ENCODE measurements at regions of chr1 and their contacts with region 1.

Region 1: DNA sequence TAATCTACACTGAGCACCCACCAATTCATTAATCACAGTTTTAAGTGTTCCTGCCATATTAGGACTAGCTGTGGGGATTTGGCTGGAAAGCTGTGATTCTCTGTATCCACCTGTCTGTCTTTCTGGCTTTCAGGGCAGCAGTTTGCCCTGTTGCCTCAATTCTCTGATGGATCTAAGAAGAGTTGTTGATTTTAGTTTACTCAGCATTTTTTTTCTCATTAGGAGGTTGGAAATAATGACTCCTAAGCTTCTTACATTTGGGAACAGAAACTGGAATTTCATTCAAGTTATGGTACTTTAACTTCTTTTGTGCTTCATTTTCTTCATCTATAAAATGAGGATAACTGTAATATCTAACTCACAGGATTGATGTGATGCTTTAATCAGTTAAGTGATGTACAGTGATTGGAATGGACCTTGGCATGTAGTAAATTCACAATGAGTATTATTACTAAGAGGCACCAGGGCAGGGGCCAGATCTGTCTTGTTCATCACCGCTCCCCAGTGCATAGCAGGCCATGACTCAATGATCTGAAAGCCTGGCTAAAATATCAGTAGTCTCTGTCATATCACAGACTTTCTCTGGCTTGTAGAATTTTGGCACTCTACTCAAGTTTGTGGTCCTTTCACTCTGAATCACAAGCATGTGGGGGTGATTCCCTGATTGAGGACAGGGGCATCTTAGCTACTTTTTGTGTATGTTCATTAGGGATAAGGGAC is 51.4 kb upstream of the GREM2 start:
- DNase-seq: peak; percentile 26
- H3K27ac ChIP-seq: no peak overlapping the region
- CTCF ChIP-seq: no peak

Region 2: GRCh38 chr1:240701412-240701811 is 38.1 kb after region 1 on chr1:
- CTCF ChIA-PET with region 1: no interaction called
- POLR2A ChIA-PET with region 1: interaction called, 12 read pairs
- DNase-seq: peak; percentile 6
- H3K27ac ChIP-seq: no peak overlapping the region
- CTCF ChIP-seq: no peak

Measured in RWPE1 (cell line).